GM10248 (cell line): ENCODE measurements at regions of chr1 and their contacts with region 1.

Region 1: DNA sequence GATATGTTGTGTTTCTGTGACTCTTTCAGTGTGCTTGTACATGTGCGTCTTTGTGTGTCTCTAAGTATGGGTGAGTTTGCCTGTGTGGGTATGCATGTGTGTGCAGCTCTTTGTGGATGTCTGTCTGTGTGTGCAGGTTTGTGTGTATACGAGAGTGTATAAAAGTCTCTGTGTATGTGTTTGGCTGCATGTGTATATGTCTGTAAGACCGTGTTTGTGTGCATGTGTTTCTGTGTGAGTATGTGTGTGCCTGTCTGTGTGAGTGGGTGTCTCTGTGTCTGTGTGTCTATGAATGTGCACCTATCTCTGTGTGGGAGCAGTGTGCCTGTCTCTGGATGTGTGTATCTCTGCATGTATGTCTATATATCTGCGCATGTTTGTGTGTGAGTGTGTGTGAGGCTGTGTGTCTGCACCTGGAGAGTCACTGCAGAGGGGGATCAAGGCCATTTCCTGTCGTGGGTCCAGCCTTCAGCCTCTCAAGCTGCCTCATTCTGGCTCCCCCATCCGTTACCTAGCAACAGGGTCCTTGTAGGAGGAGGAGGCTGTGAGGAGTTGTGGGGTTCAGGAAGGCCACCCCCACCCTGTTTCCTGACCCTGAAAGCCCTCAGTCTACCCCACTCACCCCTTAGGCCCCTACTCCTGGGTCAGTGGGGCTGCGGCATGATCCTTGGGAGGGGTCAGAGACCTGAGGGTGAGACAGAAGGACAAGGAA is 10.4 kb downstream of the FGR start:
- DNase-seq: peak; percentile 59
- CTCF ChIP-seq: no peak

Region 2: GRCh38 chr1:27445177-27445936 is 179.3 kb before region 1 on chr1:
- CTCF ChIA-PET with region 1: no interaction called
- POLR2A ChIA-PET with region 1: interaction called, 10 read pairs
- DNase-seq: peak; percentile 54
- CTCF ChIP-seq: no peak

Region 3: DNA sequence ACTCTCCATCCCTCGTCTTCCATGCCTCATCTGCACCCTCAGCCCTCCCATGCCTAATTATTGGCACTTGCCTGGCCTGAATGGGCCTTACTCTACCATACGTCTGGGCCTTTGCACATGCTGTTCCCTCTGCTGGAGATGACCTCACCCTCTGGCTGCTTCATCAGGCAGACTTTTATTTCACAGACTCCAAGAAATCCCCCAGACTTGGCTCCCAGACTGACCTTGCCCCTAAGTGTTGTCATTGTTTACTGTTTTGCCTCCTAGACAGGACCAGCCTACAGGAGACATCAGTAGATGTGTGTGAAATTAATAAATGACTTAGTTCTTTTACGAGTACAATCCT is 15.4 kb before region 1 on chr1:
- CTCF ChIA-PET with region 1: interaction called, 25 read pairs
- POLR2A ChIA-PET with region 1: interaction called, 4 read pairs
- DNase-seq: no peak
- CTCF ChIP-seq: no peak